Activated CD8-positive, alpha-beta T cell treated with anti-CD3 and anti-CD28 coated beads for 36 hours (primary cell): ENCODE measurements at regions of chr9 and their contacts with region 1.

Region 1: DNA sequence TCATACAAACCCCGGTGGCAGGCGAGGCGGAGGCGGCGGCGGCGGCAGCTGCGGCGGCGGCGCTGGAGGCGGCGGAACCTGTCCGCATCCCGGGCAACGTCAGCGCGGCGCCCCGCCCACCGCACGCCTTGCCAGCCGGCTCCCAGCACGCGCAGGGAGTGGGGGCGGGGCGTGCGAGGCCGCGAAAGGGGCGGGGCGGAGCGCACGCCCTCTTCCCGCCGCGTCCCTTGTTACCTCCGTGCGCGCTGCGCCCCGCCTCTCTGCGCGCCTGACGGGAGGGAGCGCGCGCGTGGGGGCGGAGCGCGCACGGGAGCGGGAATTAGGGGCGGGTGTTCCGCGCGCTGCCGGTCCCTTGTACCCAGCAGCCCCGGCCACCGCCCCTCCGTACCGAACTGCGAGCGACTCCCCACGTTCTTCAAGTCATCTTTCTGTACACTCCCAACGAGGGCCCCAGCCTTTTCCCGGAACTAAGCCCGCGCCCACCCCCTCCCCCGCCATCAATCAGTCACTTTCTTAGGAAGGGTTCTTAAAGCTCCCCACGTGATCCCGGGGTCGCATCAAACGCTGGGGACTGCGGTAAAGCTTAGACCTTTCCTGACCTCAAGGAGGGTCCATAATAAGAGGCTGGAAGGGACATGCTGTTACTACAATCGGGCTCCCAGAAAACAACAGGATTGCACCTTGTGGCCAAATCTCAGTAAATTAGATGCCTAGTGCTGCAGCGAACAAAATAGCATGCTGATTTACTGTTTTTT is at the start of gene AGTPBP1:
- DNase-seq: peak; percentile 97
- ATAC-seq: peak; percentile 88
- H3K4me3 Mint-ChIP-seq: peak within 1 kb of the TSS; percentile 96
- H3K27ac Mint-ChIP-seq: peak within 1 kb of the TSS; percentile 97
- H3K4me1 Mint-ChIP-seq: peaks cover 38% of the 10 kb centered on the region
- H3K27me3 Mint-ChIP-seq: peaks cover 3% of the 10 kb centered on the region
- CTCF ChIP-seq: no peak
- total RNA-seq, gene AGTPBP1: 43.9 to 46.4 TPM

Region 2: DNA sequence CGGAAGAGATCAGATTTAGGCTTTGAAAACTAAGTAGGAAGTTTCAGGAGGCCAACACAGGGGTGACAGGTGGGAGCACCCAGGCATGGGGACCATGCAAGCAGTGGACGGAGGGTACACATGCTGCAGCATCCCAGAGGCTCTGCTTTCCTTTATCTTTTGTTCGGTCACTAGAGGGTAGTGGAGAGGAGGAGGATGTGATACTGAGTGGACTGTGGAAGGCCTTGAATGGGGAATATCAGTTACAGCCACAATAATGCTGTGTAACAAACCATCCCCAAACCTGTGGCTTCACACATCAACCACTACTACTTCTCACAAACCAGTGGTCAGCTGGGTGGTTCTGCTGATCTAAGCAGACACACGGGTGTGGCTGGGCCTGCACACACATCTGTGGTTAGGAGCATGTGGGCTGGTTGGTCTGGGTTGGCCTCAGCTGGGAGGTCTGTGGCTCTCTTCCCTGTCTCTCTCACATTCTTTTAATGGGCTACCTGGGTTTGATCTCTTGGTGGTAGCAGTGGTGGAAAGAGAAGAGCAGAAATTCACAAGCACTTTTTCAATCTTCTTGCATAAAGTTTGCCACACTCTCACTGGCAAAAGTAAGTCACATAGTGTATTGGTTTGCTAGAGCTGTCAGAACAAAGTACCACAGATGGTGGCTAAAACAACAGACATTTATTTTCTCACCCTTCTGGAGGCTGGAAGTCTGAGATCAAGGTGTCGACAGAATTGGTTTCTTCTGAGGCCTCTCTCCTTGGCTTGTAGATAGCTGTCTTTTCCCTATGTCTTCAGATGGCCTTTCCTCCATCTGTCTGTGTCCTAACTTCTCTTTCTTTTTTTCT is 239.0 kb before region 1 on chr9:
- CTCF ChIA-PET with region 1: no interaction called
- POLR2A ChIA-PET with region 1: no interaction called
- intact Hi-C with region 1: no loop called
- DNase-seq: no peak
- ATAC-seq: no peak
- H3K4me3 Mint-ChIP-seq: no peak overlapping the region
- H3K27ac Mint-ChIP-seq: no peak overlapping the region
- H3K4me1 Mint-ChIP-seq: no peaks in the 10 kb centered on the region
- H3K27me3 Mint-ChIP-seq: peaks cover 2% of the 10 kb centered on the region
- CTCF ChIP-seq: no peak

Region 3: GRCh38 chr9:85702726-85703289 is 39.2 kb before region 1 on chr9:
- CTCF ChIA-PET with region 1: interaction called, 27 read pairs
- POLR2A ChIA-PET with region 1: interaction called, 3 read pairs
- intact Hi-C with region 1: no loop called
- DNase-seq: no peak
- ATAC-seq: no peak
- H3K4me3 Mint-ChIP-seq: no peak overlapping the region
- H3K27ac Mint-ChIP-seq: no peak overlapping the region
- H3K4me1 Mint-ChIP-seq: peaks cover 36% of the 10 kb centered on the region
- H3K27me3 Mint-ChIP-seq: no peaks in the 10 kb centered on the region
- CTCF ChIP-seq: no peak

Region 4: DNA sequence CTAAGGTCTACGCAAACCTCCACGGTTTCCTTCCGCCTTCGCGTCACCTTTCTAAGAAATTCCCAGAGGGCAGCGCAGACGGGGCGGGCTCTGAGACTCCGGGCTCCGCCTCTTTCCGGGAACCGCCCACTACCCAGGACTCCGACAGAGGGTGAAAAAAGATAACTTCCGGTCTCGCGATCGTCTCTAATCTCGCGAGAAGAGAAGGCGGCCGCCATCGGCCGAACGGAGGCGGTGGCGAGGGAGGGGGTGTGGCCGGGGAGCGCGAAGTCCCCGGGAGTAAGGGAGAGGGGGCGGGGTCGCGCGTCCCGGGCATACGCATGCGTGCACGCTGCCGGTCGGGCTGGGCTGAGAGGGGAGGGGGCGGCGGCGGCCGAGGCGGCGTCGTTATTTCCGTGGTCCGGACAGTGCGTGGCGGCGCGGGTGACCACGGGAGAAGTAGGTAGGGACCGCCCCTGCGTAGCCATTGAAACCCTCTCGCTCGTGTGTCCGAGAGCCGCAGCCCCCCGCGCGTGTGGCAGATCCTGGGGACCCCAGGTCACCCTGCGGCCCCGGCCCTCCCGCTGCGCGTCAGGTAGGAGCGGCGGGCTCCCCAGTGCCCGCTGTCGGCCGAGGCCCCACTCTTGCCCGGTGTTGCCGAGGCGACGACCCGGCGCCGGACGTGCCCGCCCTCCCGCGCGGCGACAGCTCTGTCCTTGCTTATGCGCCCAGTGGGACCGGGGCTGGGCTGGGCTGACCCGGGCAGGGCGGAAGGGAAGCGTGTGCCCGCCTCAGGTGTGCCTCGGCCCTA is 199.0 kb after region 1 on chr9 and contains the start of gene NAA35:
- CTCF ChIA-PET with region 1: no interaction called
- POLR2A ChIA-PET with region 1: no interaction called
- intact Hi-C with region 1: loop called (anchors 5 kb)
- DNase-seq: peak; percentile 99
- ATAC-seq: peak; percentile 91
- H3K4me3 Mint-ChIP-seq: no peak within 1 kb of the TSS
- H3K27ac Mint-ChIP-seq: peak within 1 kb of the TSS; percentile 92
- H3K4me1 Mint-ChIP-seq: peaks cover 23% of the 10 kb centered on the region
- H3K27me3 Mint-ChIP-seq: no peaks in the 10 kb centered on the region
- CTCF ChIP-seq: no peak
- total RNA-seq, gene NAA35: 25.5 to 26.3 TPM